ENCODE measurements at regions of chr1 and their contacts with region 1.

Region 1: GRCh38 chr1:8560611-8561544 is 243.0 kb downstream of the SLC45A1 start:
- DNase-seq: no peak
- ATAC-seq: peak; percentile 79 to 88 (median 84)
- H3K4me3 ChIP-seq: no peak overlapping the region
- H3K27ac ChIP-seq: no peak overlapping the region
- H3K4me1 ChIP-seq: peaks cover 5% of the 10 kb centered on the region
- H3K27me3 ChIP-seq: no peaks in the 10 kb centered on the region
- CTCF ChIP-seq: peak; percentile 96

Region 2: DNA sequence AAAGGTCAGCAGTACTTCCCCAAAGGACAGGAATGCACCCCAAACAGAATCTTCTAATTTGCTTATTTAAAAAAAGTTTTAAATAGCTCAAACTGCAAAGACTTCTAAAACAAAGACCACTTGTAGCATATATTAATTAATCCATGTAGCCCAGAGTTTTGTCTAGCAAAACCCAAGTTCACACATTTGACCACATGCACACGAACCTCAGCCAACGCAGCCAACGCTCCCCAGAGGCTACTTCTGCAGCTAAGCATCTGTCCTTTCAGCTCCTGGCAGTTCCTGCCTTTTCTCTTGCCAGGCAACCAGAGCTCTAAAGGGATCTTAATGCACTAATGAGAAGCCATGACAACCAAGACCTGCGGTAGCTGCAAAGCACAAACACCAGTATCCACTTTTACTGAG is 166.9 kb after region 1 on chr1:
- intact Hi-C with region 1: loop called (anchors 2 to 5 kb)
- DNase-seq: peak; percentile 36 to 73
- ATAC-seq: peak; percentile 53 to 88 (median 69)
- H3K4me3 ChIP-seq: no peak overlapping the region
- H3K27ac ChIP-seq: peak overlapping the region; percentile 2
- H3K4me1 ChIP-seq: peaks cover 18% of the 10 kb centered on the region
- H3K27me3 ChIP-seq: no peaks in the 10 kb centered on the region
- CTCF ChIP-seq: no peak